Endothelial cell of umbilical vein (primary cell): ENCODE measurements at regions of chr5 and their contacts with region 1.

Region 1: GRCh38 chr5:107248066-107248695 is 422.6 kb downstream of the EFNA5 start:
- DNase-seq: peak; percentile 69
- H3K4me3 ChIP-seq: no peak overlapping the region
- H3K27ac ChIP-seq: no peak overlapping the region
- H3K4me1 ChIP-seq: no peaks in the 10 kb centered on the region
- H3K27me3 ChIP-seq: no peaks in the 10 kb centered on the region
- CTCF ChIP-seq: peak; percentile 77 to 79
- POLR2A ChIP-seq: no peak

Region 2: GRCh38 chr5:106269252-106269843 is 978.8 kb before region 1 on chr5:
- CTCF ChIA-PET with region 1: interaction called, 43 read pairs
- POLR2A ChIA-PET with region 1: no interaction called
- dilution Hi-C with region 1: no loop called
- intact Hi-C with region 1: loop called (anchors 2 kb)
- DNase-seq: peak; percentile 43
- H3K4me3 ChIP-seq: no peak overlapping the region
- H3K27ac ChIP-seq: no peak overlapping the region
- H3K4me1 ChIP-seq: no peaks in the 10 kb centered on the region
- H3K27me3 ChIP-seq: no peaks in the 10 kb centered on the region
- CTCF ChIP-seq: peak; percentile 45 to 53
- POLR2A ChIP-seq: no peak

Region 3: DNA sequence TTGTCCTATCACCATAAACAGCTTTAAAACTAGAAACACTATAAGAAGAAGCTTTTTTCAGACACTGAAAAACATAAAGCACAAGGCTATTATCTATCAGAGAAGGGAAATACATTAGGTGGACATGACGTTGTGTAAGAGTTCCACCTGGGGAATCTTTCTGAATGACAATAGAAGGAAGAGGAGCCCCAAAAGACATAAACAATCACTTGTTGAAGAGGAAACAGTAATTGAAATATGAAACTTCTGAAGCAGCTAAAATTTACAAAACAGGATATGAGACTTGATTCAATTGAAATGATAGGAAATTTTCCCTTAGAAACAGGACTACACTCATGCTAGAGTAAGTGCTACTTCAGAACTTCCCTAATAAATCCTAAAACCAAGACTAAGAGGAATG is 511.1 kb before region 1 on chr5:
- CTCF ChIA-PET with region 1: no interaction called
- POLR2A ChIA-PET with region 1: no interaction called
- dilution Hi-C with region 1: no loop called
- intact Hi-C with region 1: no loop called
- DNase-seq: peak; percentile 80
- H3K4me3 ChIP-seq: peak overlapping the region in 1 of 3 experiments; percentile 2
- H3K27ac ChIP-seq: peak overlapping the region; percentile 45
- H3K4me1 ChIP-seq: peaks cover 16% of the 10 kb centered on the region
- H3K27me3 ChIP-seq: no peaks in the 10 kb centered on the region
- CTCF ChIP-seq: no peak
- POLR2A ChIP-seq: no peak

Region 4: DNA sequence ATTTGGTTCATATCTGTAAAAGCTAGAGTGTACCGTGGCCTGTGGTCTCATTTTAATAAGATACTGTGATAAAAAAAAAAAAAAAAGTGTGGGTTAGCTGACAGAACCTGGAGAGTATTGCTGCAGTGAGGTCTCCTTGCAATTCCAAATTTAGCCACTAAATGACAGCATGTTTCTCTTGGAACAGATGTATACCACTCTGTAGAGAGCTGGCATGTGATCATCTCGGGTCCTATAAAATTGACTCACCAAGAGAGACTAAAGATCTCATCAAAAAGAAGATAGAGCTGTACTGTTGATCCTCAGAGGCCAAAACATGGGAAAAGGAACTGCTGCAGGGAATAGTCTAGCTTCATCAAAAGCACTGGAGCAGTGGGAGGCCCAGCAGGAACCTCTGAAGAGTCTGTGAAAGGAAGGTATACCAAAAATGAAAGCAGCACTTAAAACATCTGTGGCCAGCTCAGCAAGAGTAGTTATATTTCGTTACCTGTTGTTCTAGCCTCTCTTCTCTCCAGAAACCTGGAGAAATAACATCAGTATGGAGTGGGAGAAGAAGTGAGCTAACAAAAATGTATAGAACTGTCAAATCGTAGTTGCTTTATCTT is 404.3 kb before region 1 on chr5:
- CTCF ChIA-PET with region 1: interaction called, 13 read pairs
- POLR2A ChIA-PET with region 1: no interaction called
- dilution Hi-C with region 1: no loop called
- intact Hi-C with region 1: loop called (anchors 2 kb)
- DNase-seq: peak; percentile 26
- H3K4me3 ChIP-seq: no peak overlapping the region
- H3K27ac ChIP-seq: no peak overlapping the region
- H3K4me1 ChIP-seq: no peaks in the 10 kb centered on the region
- H3K27me3 ChIP-seq: no peaks in the 10 kb centered on the region
- CTCF ChIP-seq: peak; percentile 13 to 20
- POLR2A ChIP-seq: no peak

Region 5: GRCh38 chr5:107263387-107264018 is 15.3 kb after region 1 on chr5:
- CTCF ChIA-PET with region 1: interaction called, 12 read pairs
- POLR2A ChIA-PET with region 1: no interaction called
- dilution Hi-C with region 1: no loop called
- intact Hi-C with region 1: no loop called
- DNase-seq: no peak
- H3K4me3 ChIP-seq: no peak overlapping the region
- H3K27ac ChIP-seq: no peak overlapping the region
- H3K4me1 ChIP-seq: peaks cover 3% of the 10 kb centered on the region
- H3K27me3 ChIP-seq: no peaks in the 10 kb centered on the region
- CTCF ChIP-seq: no peak
- POLR2A ChIP-seq: no peak